Mammary epithelial cell (primary cell): ENCODE measurements at regions of chr12 and their contacts with region 1.

Region 1: DNA sequence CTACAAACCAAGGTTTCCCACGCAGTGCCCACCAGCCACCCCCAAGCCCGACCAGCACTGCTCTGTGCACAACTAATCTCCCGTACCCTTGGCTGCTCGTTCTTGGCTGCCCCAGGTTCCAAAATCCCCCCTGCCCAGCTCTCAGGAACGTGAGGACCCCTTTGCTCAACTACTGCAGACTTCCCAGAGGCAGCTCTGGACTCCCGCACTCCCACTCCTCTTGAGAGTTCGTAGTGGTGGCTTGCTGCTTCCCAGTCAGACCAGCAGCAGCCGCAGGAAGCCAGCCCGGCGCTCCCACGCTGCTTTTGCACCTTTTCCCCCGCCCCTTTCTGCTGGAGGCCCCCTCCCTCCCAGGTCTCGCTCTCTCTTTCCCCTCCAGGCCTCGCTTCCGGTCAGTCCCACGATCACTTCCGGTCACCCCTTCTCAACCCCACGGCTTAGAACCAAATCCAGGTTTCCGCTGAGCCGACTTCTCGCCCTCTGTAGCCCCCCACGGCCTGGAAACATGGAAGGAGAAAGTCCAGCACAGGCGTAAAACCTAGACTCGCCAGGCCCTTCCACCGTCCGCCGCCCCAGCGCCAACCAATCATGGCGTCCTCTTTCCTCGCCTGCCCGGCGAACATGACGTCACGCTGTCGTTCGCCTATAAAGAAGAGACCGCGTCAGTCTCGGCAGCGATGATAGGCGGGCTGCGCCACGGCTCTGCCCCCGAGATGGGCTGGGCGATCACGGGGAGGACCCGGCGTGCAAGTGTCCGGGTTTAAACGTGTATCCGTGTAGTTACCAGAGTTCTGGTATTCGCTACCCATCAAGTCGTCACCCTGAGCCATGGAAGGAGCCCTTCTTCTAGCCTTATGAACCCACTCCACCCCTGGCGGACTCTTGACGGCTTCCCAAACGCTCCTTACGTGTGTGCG is at the start of gene TFCP2:
- DNase-seq: peak; percentile 93
- H3K4me3 ChIP-seq: peak within 1 kb of the TSS; percentile 67 to 80 (median 74)
- H3K27ac ChIP-seq: peak within 1 kb of the TSS; percentile 93
- H3K4me1 ChIP-seq: no peaks in the 10 kb centered on the region
- H3K27me3 ChIP-seq: no peaks in the 10 kb centered on the region
- CTCF ChIP-seq: no peak
- total RNA-seq, gene TFCP2: 12.0 to 32.7 TPM

Region 2: DNA sequence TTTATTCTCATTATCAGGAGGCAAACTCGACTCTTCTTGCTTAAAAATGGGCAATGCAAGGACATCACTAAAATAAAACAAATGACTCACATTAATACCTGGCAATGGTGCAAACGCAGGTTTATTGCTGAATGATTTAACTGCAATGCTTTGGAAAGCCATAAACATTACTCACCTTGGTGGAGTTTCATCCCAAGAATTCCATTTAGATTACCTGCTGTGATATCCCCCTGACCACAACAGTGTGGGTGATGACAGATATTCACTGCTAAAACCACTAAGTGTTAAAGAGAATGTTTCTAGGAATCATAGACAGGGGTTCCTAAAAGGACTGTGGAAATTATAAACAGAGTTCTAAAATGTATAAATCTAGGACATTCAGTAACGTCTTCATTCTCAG is 54.1 kb before region 1 on chr12:
- CTCF ChIA-PET with region 1: no interaction called
- dilution Hi-C with region 1: no loop called
- in situ Hi-C with region 1: no loop called
- intact Hi-C with region 1: loop called (anchors 1 kb)
- DNase-seq: peak; percentile 97
- H3K4me3 ChIP-seq: no peak overlapping the region
- H3K27ac ChIP-seq: peak overlapping the region; percentile 40
- H3K4me1 ChIP-seq: peaks cover 13% of the 10 kb centered on the region
- H3K27me3 ChIP-seq: no peaks in the 10 kb centered on the region
- CTCF ChIP-seq: no peak

Region 3: DNA sequence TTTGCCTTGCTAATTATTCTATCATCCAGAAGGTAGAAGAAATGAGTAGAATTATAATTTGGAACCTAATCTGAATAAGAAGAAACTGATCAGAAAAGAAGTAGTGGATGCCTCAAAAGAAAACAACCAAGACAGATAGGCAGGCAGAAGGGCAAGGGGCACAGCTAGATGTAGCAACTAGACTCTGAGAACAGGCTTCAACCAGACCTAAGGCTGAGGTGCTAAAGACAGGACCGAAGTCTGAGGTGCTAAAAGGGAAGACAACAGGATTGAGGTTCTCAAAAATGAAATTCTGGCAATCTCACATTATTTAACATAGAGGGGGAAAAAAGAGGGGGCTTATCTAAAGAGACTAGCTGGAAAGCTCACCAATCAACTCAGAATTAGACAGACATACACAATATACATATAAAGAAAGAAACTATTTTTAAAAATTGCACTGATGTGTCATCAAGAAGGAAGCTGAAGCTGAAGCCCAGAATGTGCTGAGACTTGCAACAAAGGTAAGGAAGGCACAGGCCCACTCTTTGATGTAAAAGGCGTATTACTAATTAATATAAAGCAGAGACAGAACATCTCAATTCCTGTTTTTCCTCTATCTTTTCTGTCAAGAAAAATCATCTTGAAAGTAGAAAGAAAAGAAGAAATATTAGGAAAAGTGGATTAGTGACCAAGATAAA is 45.6 kb before region 1 on chr12:
- CTCF ChIA-PET with region 1: no interaction called
- dilution Hi-C with region 1: no loop called
- in situ Hi-C with region 1: no loop called
- intact Hi-C with region 1: loop called (anchors 2 kb)
- DNase-seq: peak; percentile 79
- H3K4me3 ChIP-seq: peak overlapping the region in 2 of 3 experiments; percentile 10 to 21
- H3K27ac ChIP-seq: peak overlapping the region; percentile 85
- H3K4me1 ChIP-seq: peaks cover 13% of the 10 kb centered on the region
- H3K27me3 ChIP-seq: no peaks in the 10 kb centered on the region
- CTCF ChIP-seq: no peak

Region 4: DNA sequence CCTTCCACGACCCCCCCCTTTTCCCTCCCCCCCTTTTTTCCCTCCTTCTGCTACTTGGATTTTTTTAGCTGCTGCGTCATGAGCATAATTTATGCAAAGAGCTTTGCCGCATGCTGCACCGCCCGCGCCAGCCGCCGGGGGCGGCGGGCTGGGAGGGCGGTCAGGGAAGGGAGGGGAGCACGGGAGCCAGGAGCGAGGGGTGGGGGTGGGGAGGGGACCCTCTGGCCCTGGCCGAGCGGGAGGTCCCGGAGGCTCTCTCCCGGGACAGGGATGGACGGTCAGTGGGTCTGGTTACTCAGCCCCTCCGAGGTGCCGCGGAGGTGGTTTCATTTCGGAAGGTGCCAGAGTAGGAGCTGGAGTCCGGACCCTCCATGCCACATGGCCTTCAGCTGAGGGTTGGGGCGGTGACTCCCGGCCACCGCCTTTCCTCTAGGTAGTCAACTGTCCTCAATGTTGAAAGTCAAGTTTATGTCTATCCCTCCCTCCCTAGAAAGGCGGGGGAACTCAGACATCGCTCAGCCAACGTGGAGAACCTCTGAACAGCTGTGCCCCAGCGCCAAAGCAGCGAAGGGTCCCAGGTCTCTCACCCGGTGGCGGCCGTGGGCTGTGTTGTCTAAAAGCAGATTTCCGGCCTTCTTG is 45.3 kb after region 1 on chr12 and contains the start of gene POU6F1:
- CTCF ChIA-PET with region 1: no interaction called
- dilution Hi-C with region 1: no loop called
- in situ Hi-C with region 1: no loop called
- intact Hi-C with region 1: loop called (anchors 1 kb)
- DNase-seq: peak; percentile 61
- H3K4me3 ChIP-seq: peak within 1 kb of the TSS; percentile 55 to 86 (median 66)
- H3K27ac ChIP-seq: peak within 1 kb of the TSS; percentile 25
- H3K4me1 ChIP-seq: peaks cover 10% of the 10 kb centered on the region
- H3K27me3 ChIP-seq: no peaks in the 10 kb centered on the region
- CTCF ChIP-seq: peak; percentile 33 to 64
- total RNA-seq, gene POU6F1: 2.6 to 3.5 TPM

Region 5: GRCh38 chr12:51247523-51248206 is 74.9 kb after region 1 on chr12:
- CTCF ChIA-PET with region 1: no interaction called
- dilution Hi-C with region 1: no loop called
- in situ Hi-C with region 1: no loop called
- intact Hi-C with region 1: no loop called
- DNase-seq: no peak
- H3K4me3 ChIP-seq: no peak overlapping the region
- H3K27ac ChIP-seq: no peak overlapping the region
- H3K4me1 ChIP-seq: no peaks in the 10 kb centered on the region
- H3K27me3 ChIP-seq: no peaks in the 10 kb centered on the region
- CTCF ChIP-seq: no peak